ENCODE measurements at regions of chr1 and their contacts with region 1.

Region 1: DNA sequence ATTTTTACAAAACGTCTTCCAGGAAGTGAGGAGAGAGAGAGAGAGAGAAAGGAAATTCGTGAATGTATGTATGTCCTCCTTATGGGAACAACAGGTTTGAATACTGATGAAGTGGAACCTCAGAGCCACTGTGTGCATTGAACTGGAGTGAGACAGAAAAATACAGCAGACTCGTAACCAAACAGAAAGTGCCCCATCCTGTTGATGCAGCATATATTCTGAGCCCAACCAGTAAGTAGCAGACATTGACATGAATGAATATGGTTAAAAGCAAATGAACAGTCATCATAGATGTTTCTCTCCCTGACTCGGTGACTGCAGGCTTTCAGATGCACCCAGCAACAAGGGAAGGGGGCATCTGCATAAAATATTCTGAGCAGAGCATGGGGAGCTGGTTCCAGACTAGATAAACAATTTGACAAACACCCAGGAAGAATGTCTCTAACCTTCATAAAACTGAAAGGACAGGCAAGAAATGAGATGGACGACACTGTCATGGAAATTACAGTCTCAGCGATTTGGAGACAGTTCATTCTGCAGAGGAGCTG is 471.0 kb upstream of the PBX1 start:
- DNase-seq: no peak
- H3K4me3 Mint-ChIP-seq: no peak overlapping the region
- H3K27ac Mint-ChIP-seq: no peak overlapping the region
- H3K4me1 Mint-ChIP-seq: no peaks in the 10 kb centered on the region
- H3K27me3 Mint-ChIP-seq: no peaks in the 10 kb centered on the region

Region 2: GRCh38 chr1:162951553-162952315 is 1136.2 kb before region 1 on chr1:
- CTCF ChIA-PET with region 1: no interaction called
- intact Hi-C with region 1: loop called (anchors 10 kb)
- DNase-seq: no peak
- H3K4me3 Mint-ChIP-seq: no peak overlapping the region
- H3K27ac Mint-ChIP-seq: no peak overlapping the region
- H3K4me1 Mint-ChIP-seq: peaks cover 7% of the 10 kb centered on the region
- H3K27me3 Mint-ChIP-seq: peaks cover 9% of the 10 kb centered on the region